ENCODE measurements at regions of chr11 and their contacts with region 1.

Region 1: DNA sequence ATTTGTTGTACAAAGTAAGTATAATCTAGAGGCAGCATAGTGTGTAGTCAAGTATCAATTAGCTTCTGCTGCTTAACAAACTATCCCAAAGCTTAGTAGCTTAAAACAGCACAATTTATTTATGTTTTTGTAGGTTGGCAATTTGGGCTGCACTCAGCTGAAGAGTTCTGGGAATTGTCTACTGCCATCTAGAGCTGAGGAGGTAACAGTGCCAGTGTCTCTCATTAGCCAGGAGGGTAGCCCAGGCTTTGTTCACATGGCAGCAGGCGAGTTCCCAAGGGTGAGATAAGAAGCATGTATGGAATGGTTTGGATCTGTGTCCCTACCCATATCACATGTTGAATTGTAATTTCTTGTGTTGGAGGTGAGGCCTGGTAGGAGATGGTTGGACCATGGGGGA is 45.8 kb upstream of the SLN start:
- DNase-seq: no peak
- ATAC-seq: peak in 1 of 2 donors; percentile 26
- H3K4me3 ChIP-seq: no peak overlapping the region
- H3K27ac ChIP-seq: no peak overlapping the region
- H3K4me1 ChIP-seq: peaks cover 9 to 10% of the 10 kb centered on the region in 2 donors
- H3K27me3 ChIP-seq: no peaks in the 10 kb centered on the region
- CTCF ChIP-seq: peak in 2 of 5 experiments; percentile 31 to 36
- POLR2A ChIP-seq: no peak

Region 2: DNA sequence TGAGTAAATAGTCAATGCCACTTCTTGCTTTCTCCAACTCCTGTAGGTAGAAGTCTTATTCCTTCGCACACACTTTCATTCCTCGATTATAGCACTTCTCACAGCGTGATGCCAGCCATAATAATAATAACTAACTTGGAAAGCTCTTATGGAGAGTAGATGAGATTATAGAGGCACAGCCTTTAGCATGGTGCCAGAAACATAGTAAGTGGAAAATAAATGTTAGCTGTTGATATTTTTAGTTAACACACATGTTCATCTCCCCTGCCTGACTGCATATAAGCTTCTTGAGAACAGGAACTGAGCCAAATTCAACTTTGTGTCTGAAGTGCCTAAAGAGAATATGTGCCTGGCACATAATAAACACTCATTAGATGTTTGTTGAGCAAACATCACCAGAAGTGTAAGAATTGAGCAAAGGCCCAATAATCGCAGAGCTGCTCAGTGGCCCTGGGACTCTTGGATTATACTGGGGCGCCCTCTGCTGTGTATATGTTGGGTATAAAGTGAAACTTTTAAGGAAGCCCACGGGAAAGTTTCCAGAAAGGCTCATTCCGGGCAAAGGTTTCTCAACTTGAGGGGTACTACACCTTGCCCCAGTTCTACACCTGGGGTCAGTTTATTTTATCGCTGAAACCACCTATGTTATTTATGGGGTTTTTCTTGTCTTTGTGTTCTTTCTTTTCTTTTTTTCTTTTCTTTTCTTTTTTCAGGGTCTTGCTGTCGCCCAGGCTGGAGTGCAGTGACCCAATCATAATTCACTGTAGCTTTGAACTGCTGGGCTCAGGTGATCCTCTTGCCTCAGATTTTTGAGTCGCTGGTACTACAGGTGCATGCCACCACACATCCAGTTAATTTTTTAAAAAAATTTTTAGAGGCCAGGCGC is 68.1 kb before region 1 on chr11:
- in situ Hi-C with region 1: loop called in 1 of 4 experiments (anchors 10 kb)
- intact Hi-C with region 1: loop called (anchors 2 kb)
- DNase-seq: peak; percentile 53 to 56
- ATAC-seq: peak; percentile 79 to 89
- H3K4me3 ChIP-seq: peak overlapping the region in 3 of 4 donors; percentile 9 to 19 (median 13)
- H3K27ac ChIP-seq: peak overlapping the region; percentile 13 to 33 (median 28)
- H3K4me1 ChIP-seq: peaks cover 0 to 3% of the 10 kb centered on the region in 2 donors
- H3K27me3 ChIP-seq: no peaks in the 10 kb centered on the region
- CTCF ChIP-seq: peak; percentile 49 to 74 (median 67)
- POLR2A ChIP-seq: no peak

Region 3: DNA sequence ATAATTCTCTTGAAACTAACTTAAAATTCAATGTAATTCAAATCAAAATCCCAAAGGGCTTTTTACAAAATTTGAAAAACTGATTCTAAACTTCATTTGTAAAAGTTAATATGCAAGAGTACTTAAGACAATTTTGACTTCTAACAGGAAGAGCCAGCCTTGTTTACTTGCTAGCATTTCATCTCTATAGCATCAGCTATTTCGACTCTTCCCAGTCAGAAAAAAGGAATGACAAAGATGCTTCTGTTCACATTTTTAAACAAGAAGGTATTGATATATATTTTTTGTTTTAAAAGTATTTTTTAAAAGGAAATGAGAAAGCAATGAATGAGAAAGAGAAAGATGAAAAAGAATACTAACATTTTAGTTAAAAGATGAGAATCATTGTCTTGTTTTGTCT is 62.2 kb before region 1 on chr11:
- in situ Hi-C with region 1: loop called in 1 of 4 experiments (anchors 10 kb)
- intact Hi-C with region 1: loop called (anchors 2 kb)
- DNase-seq: no peak
- ATAC-seq: no peak
- H3K4me3 ChIP-seq: no peak overlapping the region
- H3K27ac ChIP-seq: peak overlapping the region; percentile 66 to 75 (median 70)
- H3K4me1 ChIP-seq: peaks cover 17 to 18% of the 10 kb centered on the region in 2 donors
- H3K27me3 ChIP-seq: no peaks in the 10 kb centered on the region
- CTCF ChIP-seq: no peak
- POLR2A ChIP-seq: no peak

Measured in gastrocnemius medialis (tissue), 4 donors.